Activated CD4-positive, alpha-beta memory T cell treated with anti-CD3 and anti-CD28 coated beads for 36 hours (primary cell): ENCODE measurements at regions of chr7 and their contacts with region 1.

Region 1: DNA sequence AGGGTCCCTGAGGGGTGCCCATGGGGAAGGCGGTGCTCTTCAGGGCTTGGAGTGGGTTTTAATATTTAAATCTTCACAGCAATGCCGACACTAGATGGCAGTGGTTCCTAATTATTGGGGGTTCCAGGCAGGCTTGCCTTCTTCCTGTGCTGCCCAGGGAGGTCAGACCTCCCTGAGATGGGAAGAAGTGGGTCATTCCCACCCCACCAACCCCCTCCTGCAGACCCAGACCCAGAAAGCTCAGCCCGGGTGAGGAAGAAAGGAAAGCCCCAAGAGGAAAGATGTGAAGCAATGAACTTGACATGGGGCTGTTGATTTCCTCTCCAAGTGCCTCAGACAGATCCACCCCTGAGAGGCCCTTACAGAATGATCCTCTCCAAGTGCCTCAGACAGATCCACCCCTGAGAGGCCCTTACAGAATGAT is 85.1 kb upstream of the LANCL2 start:
- DNase-seq: peak; percentile 66
- H3K4me3 Mint-ChIP-seq: no peak overlapping the region
- H3K27ac Mint-ChIP-seq: no peak overlapping the region
- H3K4me1 Mint-ChIP-seq: no peaks in the 10 kb centered on the region
- H3K27me3 Mint-ChIP-seq: peaks cover 3% of the 10 kb centered on the region

Region 2: DNA sequence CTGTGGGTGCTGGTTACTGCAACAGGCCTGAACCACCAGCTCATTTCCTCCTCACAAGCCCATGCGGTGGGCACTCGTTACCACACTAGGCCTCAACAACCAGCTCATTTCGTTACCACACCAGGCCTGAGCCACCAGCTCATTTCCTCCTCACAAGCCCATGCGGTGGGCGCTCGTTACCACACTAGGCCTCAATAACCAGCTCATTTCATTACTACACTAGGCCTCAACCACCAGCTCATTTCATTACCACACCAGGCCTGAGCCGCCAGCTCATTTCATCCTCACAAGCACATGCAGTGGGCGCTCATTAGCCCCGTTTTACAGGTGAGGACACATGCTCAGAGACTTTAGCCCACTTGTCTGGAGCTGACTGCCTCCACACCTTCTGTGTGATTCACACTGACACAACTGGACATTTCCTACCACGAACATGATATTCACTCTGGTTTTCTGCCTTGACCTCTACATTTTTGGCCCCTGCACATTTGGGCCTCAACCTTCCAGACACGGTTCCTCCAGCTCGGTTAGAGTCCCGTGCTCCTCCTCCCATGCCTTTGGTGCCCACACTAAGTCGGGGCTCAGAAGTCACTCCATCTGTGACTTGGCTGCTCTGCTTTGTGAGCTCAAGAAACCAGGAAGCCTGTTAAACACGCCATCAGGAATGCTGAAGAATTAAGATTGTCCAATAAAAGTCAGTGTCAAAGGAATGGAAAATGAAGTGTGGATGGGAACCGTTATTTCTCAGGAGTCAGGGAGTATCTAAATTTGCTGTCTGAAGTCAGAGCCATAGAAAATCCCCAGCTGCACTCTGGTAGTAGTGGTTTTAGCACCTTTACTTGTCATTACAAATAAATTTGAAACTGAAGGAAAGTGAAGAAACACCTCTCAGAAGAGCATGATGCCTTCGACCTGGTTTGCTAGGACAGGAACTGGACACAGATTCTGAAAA is 29.3 kb after region 1 on chr7:
- CTCF ChIA-PET with region 1: interaction called, 10 read pairs
- POLR2A ChIA-PET with region 1: no interaction called
- intact Hi-C with region 1: no loop called
- DNase-seq: peak; percentile 95
- H3K4me3 Mint-ChIP-seq: peak overlapping the region; percentile 16
- H3K27ac Mint-ChIP-seq: peak overlapping the region; percentile 90
- H3K4me1 Mint-ChIP-seq: peaks cover 43% of the 10 kb centered on the region
- H3K27me3 Mint-ChIP-seq: peaks cover 25% of the 10 kb centered on the region

Region 3: GRCh38 chr7:55387062-55387965 is 107.3 kb after region 1 on chr7:
- CTCF ChIA-PET with region 1: no interaction called
- POLR2A ChIA-PET with region 1: no interaction called
- intact Hi-C with region 1: no loop called
- DNase-seq: no peak
- H3K4me3 Mint-ChIP-seq: no peak overlapping the region
- H3K27ac Mint-ChIP-seq: no peak overlapping the region
- H3K4me1 Mint-ChIP-seq: peaks cover 7% of the 10 kb centered on the region
- H3K27me3 Mint-ChIP-seq: no peaks in the 10 kb centered on the region

Region 4: GRCh38 chr7:55409482-55410225 is 129.6 kb after region 1 on chr7:
- CTCF ChIA-PET with region 1: interaction called, 135 read pairs
- POLR2A ChIA-PET with region 1: no interaction called
- intact Hi-C with region 1: no loop called
- DNase-seq: no peak
- H3K4me3 Mint-ChIP-seq: no peak overlapping the region
- H3K27ac Mint-ChIP-seq: no peak overlapping the region
- H3K4me1 Mint-ChIP-seq: no peaks in the 10 kb centered on the region
- H3K27me3 Mint-ChIP-seq: no peaks in the 10 kb centered on the region

Region 5: GRCh38 chr7:55415173-55415778 is 135.2 kb after region 1 on chr7:
- CTCF ChIA-PET with region 1: interaction called, 135 read pairs
- POLR2A ChIA-PET with region 1: no interaction called
- intact Hi-C with region 1: loop called (anchors 1 kb)
- DNase-seq: peak; percentile 85
- H3K4me3 Mint-ChIP-seq: no peak overlapping the region
- H3K27ac Mint-ChIP-seq: no peak overlapping the region
- H3K4me1 Mint-ChIP-seq: peaks cover 2% of the 10 kb centered on the region
- H3K27me3 Mint-ChIP-seq: no peaks in the 10 kb centered on the region

Region 6: DNA sequence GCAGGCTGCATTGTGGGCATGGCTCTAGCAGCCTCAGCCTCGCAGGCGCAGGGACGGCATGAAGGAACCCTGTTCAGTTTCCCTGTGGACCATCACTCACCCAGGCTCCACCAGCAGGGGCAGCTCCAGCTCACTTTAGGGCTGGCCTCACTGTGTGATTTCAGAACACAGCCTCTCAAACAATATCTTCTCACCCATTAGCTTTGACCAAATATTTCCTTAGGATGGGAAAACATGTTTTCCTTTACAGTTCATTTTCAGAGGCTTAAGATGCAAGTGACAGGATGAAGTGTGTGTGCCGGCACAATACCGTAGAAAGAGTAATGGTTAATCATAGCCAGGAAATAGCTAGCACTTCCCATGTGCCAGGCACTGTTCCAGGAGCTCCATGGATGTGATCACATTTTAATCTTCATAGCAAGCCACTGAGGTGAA is 143.3 kb after region 1 on chr7:
- CTCF ChIA-PET with region 1: interaction called, 10 read pairs
- POLR2A ChIA-PET with region 1: no interaction called
- intact Hi-C with region 1: no loop called
- DNase-seq: no peak
- H3K4me3 Mint-ChIP-seq: no peak overlapping the region
- H3K27ac Mint-ChIP-seq: no peak overlapping the region
- H3K4me1 Mint-ChIP-seq: peaks cover 15% of the 10 kb centered on the region
- H3K27me3 Mint-ChIP-seq: no peaks in the 10 kb centered on the region

Region 7: DNA sequence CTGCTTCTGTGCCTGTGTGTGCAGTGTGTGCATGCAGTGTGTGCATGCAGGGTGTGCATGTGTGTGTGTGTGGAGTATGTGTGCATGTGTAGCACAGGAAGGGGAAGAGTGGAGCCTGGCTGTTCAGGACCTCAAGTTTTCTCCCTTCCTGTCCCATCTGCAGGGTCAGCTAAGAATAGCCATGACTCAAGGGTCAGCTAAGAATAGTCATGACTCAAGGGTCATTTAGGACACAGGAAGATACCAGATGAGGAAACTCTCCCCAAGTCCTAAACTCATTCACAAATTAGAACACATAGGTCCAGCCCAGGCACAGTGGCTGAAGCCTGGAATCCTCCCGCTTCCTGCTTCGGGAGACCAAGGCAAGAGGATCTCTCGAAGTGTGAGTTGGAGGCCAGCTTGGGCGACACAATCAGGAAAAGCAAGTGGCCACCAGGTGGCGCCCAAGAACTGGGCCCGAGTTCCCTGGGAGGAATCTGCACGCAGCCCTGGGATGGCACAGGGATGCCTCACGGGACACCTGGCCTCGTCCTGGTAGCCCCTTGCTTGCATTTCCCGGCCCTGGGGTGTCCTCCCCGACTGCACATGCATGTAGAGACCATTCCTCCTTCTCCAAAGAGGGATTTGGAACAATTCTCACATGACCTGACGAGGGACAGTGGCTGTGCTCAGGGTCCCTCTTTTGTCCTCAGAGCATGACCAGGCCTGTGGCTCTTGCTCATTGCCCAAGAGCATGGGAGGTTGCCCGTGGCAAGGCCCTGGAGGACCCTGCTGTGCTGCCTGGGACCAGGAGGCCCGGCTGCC is 313.7 kb after region 1 on chr7:
- CTCF ChIA-PET with region 1: interaction called, 4 read pairs
- POLR2A ChIA-PET with region 1: no interaction called
- intact Hi-C with region 1: loop called (anchors 2 kb)
- DNase-seq: peak; percentile 84
- H3K4me3 Mint-ChIP-seq: no peak overlapping the region
- H3K27ac Mint-ChIP-seq: no peak overlapping the region
- H3K4me1 Mint-ChIP-seq: peaks cover 11% of the 10 kb centered on the region
- H3K27me3 Mint-ChIP-seq: peaks cover 2% of the 10 kb centered on the region